T-cell (primary cell): ENCODE measurements at regions of chr7 and their contacts with region 1.

Region 1: GRCh38 chr7:138608275-138608674 is 92.9 kb downstream of the SVOPL start:
- DNase-seq: no peak
- ATAC-seq: no peak
- H3K4me3 ChIP-seq: no peak overlapping the region
- H3K4me3 Mint-ChIP-seq: no peak overlapping the region
- H3K27ac ChIP-seq: no peak overlapping the region
- H3K27ac Mint-ChIP-seq: no peak overlapping the region
- H3K4me1 ChIP-seq: no peaks in the 10 kb centered on the region
- H3K4me1 Mint-ChIP-seq: peaks cover 13 to 16% (median 15%) of the 10 kb centered on the region in 3 donors
- H3K27me3 ChIP-seq: no peaks in the 10 kb centered on the region
- H3K27me3 Mint-ChIP-seq: no peaks in the 10 kb centered on the region

Region 2: DNA sequence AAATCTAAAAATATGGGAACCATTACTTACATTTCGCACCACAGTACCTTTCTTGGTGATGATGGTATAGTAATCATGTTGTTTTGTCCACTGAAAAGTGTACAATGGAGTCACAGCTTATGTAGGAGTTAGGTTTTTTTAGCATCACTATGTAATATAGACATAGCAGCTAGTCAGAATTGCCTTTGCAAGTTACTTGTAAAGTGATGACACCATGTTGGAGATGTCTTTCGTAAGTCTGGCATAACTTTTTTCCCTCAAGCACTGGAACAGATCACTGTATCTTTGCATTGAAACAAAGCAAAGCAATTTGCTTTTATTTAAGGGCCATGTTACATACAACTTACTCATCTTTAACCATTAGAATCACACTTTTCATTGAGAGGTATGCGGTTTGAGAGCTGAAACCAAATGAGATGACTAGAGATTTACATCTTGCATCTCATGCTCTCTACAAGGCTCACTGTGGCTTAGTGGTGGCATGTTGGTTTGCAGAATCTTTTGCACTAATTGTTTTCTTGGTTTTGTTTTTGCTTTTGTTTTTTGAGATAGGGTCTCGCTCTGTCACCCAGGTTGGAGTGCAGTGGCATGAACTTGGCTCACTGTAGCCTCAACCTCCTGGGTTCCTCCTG is 641.0 kb after region 1 on chr7:
- CTCF ChIA-PET with region 1: no interaction called
- POLR2A ChIA-PET with region 1: interaction called in 1 of 2 experiments, 10 read pairs
- DNase-seq: no peak
- ATAC-seq: no peak
- H3K4me3 ChIP-seq: no peak overlapping the region
- H3K4me3 Mint-ChIP-seq: no peak overlapping the region
- H3K27ac ChIP-seq: no peak overlapping the region
- H3K27ac Mint-ChIP-seq: no peak overlapping the region
- H3K4me1 ChIP-seq: no peaks in the 10 kb centered on the region
- H3K4me1 Mint-ChIP-seq: peaks cover 0 to 9% (median 4%) of the 10 kb centered on the region in 3 donors
- H3K27me3 ChIP-seq: no peaks in the 10 kb centered on the region
- H3K27me3 Mint-ChIP-seq: no peaks in the 10 kb centered on the region